Calu3 (cell line): ENCODE measurements at regions of chr1 and their contacts with region 1.

Region 1: DNA sequence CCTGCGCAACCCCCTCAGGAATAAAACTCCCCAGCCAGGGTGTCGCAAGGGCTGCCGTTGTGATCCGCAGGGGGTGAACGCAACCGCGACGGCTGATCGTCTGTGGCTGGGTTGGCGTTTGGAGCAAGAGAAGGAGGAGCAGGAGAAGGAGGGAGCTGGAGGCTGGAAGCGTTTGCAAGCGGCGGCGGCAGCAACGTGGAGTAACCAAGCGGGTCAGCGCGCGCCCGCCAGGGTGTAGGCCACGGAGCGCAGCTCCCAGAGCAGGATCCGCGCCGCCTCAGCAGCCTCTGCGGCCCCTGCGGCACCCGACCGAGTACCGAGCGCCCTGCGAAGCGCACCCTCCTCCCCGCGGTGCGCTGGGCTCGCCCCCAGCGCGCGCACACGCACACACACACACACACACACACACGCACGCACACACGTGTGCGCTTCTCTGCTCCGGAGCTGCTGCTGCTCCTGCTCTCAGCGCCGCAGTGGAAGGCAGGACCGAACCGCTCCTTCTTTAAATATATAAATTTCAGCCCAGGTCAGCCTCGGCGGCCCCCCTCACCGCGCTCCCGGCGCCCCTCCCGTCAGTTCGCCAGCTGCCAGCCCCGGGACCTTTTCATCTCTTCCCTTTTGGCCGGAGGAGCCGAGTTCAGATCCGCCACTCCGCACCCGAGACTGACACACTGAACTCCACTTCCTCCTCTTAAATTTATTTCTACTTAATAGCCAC is 696 bp downstream of the TGFB2 start:
- DNase-seq: peak; percentile 70
- H3K4me3 Mint-ChIP-seq: no peak overlapping the region
- H3K27ac Mint-ChIP-seq: no peak overlapping the region
- H3K4me1 Mint-ChIP-seq: peaks cover 19% of the 10 kb centered on the region
- H3K27me3 Mint-ChIP-seq: no peaks in the 10 kb centered on the region
- CTCF ChIP-seq: no peak

Region 2: GRCh38 chr1:218250492-218250891 is 95.3 kb before region 1 on chr1:
- CTCF ChIA-PET with region 1: no interaction called
- intact Hi-C with region 1: no loop called
- DNase-seq: no peak
- H3K4me3 Mint-ChIP-seq: no peak overlapping the region
- H3K27ac Mint-ChIP-seq: no peak overlapping the region
- H3K4me1 Mint-ChIP-seq: no peaks in the 10 kb centered on the region
- H3K27me3 Mint-ChIP-seq: no peaks in the 10 kb centered on the region
- CTCF ChIP-seq: no peak

Region 3: GRCh38 chr1:218377143-218377660 is 31.4 kb after region 1 on chr1:
- CTCF ChIA-PET with region 1: interaction called, 6 read pairs
- intact Hi-C with region 1: loop called (anchors 2 kb)
- DNase-seq: peak; percentile 83
- H3K4me3 Mint-ChIP-seq: peak overlapping the region; percentile 41
- H3K27ac Mint-ChIP-seq: peak overlapping the region; percentile 83
- H3K4me1 Mint-ChIP-seq: peaks cover 83% of the 10 kb centered on the region
- H3K27me3 Mint-ChIP-seq: no peaks in the 10 kb centered on the region
- CTCF ChIP-seq: no peak

Region 4: DNA sequence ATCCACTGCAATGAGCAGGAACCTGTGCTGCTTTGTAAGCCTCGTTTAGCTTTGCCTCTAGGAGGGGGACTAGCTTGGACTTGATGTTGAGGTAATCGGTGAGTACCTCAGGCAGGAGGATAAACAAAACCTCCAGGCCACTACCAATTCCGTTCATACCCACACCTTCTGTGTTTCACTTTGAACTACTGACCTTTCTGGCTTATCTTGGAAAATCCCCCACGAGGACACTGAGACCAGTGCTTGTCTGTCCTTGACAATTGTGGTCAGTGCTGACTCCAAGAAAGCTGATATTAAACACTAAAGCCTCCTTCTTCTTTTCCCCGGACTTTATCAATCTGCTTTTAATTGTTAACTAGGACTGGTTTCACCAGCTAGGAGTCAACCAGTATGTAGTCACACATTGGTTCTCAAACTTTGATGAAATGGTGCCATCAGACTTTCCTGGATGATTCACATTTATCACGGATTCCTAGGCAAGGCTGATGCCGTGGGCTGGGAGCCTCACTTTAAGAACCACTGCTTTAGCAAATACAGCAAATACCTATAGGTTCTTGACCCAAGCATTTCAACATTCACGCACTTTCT is 52.0 kb after region 1 on chr1:
- CTCF ChIA-PET with region 1: interaction called, 4 read pairs
- intact Hi-C with region 1: loop called (anchors 2 kb)
- DNase-seq: peak; percentile 82
- H3K4me3 Mint-ChIP-seq: peak overlapping the region; percentile 26
- H3K27ac Mint-ChIP-seq: peak overlapping the region; percentile 71
- H3K4me1 Mint-ChIP-seq: peaks cover 40% of the 10 kb centered on the region
- H3K27me3 Mint-ChIP-seq: no peaks in the 10 kb centered on the region
- CTCF ChIP-seq: no peak

Region 5: GRCh38 chr1:218488986-218489385 is 143.2 kb after region 1 on chr1:
- CTCF ChIA-PET with region 1: interaction called, 3 read pairs
- intact Hi-C with region 1: loop called (anchors 5 kb)
- DNase-seq: peak; percentile 31
- H3K4me3 Mint-ChIP-seq: no peak overlapping the region
- H3K27ac Mint-ChIP-seq: no peak overlapping the region
- H3K4me1 Mint-ChIP-seq: peaks cover 59% of the 10 kb centered on the region
- H3K27me3 Mint-ChIP-seq: no peaks in the 10 kb centered on the region
- CTCF ChIP-seq: no peak

Region 6: GRCh38 chr1:218674280-218674773 is 328.5 kb after region 1 on chr1:
- CTCF ChIA-PET with region 1: no interaction called
- intact Hi-C with region 1: loop called (anchors 10 kb)
- DNase-seq: peak; percentile 76
- H3K4me3 Mint-ChIP-seq: peak overlapping the region; percentile 28
- H3K27ac Mint-ChIP-seq: peak overlapping the region; percentile 59
- H3K4me1 Mint-ChIP-seq: peaks cover 19% of the 10 kb centered on the region
- H3K27me3 Mint-ChIP-seq: no peaks in the 10 kb centered on the region
- CTCF ChIP-seq: no peak

Region 7: GRCh38 chr1:218823291-218823900 is 477.6 kb after region 1 on chr1:
- CTCF ChIA-PET with region 1: no interaction called
- intact Hi-C with region 1: loop called (anchors 5 kb)
- DNase-seq: peak; percentile 19
- H3K4me3 Mint-ChIP-seq: no peak overlapping the region
- H3K27ac Mint-ChIP-seq: peak overlapping the region; percentile 77
- H3K4me1 Mint-ChIP-seq: peaks cover 57% of the 10 kb centered on the region
- H3K27me3 Mint-ChIP-seq: no peaks in the 10 kb centered on the region
- CTCF ChIP-seq: no peak

Region 8: GRCh38 chr1:218945050-218945449 is 599.2 kb after region 1 on chr1:
- CTCF ChIA-PET with region 1: no interaction called
- intact Hi-C with region 1: loop called (anchors 5 kb)
- DNase-seq: no peak
- H3K4me3 Mint-ChIP-seq: no peak overlapping the region
- H3K27ac Mint-ChIP-seq: peak overlapping the region; percentile 66
- H3K4me1 Mint-ChIP-seq: peaks cover 51% of the 10 kb centered on the region
- H3K27me3 Mint-ChIP-seq: no peaks in the 10 kb centered on the region
- CTCF ChIP-seq: no peak